Posterior vena cava (tissue), 2 donors: ENCODE measurements at regions of chr14 and their contacts with region 1.

Region 1: DNA sequence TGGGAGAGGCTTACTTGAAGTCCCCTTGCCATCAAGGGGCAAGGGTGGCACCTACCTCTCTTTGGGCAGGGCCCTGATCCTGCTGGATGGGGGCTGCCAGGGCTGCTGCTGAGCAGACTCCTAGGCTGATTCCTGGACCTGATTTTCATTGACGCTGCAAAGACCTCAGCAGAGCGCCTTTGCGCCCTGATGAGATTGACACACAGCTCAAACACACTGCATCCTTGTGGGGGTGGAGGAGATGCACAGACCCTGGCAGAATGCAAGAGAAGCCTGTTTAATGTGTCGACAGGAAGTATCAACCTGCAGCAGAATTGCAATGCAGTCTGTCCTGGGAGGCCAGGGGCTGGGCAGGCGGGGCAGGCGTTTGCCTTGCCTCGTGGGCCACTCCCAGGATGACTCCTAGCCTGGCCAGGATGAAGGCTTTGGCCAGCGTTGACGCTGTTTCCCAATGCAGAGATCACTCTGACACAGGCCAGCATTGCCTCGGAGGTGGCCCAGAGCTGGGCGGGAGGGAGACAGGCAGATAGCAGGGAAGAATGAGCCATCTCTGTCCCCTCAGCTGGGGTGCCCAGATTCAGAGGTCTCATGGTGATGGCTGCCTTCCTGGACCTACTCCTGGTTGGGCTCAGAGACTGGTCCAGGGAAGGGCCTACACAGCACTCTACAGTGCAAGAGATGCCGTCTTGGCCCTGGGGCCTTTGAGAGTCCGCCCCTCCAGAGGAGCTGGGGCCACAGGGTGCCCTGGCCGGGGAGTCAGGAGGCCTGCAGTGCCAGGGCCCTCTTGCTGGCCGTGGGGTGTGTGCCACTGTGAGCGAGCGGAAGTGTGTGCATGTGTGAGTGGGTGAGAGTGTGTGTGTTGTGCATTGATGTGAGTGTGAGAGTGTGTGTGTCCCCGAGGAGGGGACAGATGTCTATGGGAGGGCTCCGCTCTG is 108.3 kb downstream of the KIF26A start:
- DNase-seq: peak; percentile 47

Region 2: DNA sequence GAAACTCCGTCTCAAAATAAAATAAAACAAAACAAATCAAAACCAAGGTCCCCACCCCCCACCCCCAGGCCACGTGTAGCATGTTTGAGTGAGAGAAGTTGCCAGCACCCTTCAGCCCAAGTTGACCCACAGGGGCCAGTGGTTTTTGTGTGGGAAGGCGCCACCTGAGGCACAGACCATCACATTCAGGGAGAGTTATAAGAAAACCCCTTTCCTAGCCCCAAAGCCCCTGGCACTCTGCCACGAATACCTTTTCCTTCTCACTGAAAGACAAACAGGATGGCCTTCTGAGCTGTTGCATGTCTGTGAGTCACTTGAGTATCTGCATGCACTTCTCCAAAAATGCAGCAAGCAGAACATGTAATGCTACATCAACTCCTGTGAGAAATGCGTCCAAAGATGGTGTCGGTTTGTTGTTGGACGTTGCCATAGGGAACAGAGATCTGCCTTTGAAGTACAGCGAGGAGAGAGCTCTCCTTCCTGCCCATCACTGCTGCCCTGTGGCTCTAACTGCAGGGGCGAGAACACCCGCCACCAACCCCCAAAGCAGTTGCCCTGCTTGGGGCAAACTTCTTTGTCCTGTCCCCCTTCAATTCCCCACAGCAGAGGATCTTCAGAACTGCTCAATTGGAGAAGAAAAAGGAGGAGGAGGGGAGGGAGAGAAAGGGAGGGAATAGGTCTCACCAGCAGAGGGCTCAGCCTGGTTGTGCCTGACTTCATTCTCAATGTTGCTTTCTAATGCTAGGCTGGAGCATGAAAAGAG is 1472.1 kb before region 1 on chr14:
- intact Hi-C with region 1: loop called in 1 of 2 experiments (anchors 5 kb)
- DNase-seq: no peak

Region 3: DNA sequence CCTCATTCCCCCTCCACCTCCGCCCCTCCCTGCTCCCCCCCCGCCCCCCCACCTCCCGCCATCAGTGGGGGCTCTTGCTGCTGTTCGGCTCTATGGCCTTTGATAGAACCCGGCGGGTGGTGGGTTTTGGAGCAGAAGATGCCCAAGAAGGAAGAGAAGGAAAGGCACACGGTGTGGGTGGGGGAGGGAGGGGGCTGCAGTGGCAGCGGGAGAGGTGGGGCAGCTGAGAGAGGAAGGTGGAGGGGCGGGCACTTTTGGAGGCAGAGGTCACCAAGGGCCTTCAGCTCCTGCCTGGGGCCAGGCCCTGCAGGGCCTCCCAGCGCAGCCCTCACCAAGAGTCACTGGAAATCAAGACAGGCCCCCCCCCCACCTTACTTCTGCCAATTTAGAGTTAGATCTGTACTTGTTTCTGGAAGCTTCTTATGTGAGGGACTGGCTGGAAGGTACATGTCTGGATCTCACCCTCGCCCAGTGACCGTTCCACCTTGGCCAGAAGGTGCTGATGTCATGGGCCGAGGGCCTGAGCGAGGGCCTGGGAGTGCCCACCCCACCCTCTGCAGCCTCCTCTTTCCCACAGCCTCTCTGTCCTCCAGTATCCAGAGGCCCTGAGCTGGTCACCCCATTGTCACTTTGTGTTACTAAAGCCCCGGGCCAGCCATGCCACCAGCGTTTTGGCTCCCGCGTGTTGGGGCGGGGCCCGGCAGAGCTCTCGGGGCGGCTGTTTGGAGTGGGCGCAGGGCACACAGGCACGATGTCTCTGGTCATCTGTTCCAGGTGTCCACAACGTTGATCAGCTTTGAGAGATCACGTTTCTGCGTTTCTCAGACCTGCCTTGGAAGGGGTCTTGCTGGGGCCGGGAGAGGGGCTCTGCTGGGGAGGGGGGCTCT is 45.7 kb after region 1 on chr14:
- intact Hi-C with region 1: loop called in 1 of 2 experiments (anchors 1 kb)
- DNase-seq: peak; percentile 58